GM12878 (cell line): ENCODE measurements at regions of chr20 and their contacts with region 1.

Region 1: GRCh38 chr20:59087829-59088433 is 45.3 kb upstream of the PRELID3B start:
- DNase-seq: no peak
- ATAC-seq: peak; percentile 91
- H3K4me3 ChIP-seq: no peak overlapping the region
- H3K27ac ChIP-seq: no peak overlapping the region
- H3K4me1 ChIP-seq: no peaks in the 10 kb centered on the region
- H3K27me3 ChIP-seq: peaks cover 0 to 11% of the 10 kb centered on the region in 2 experiments
- CTCF ChIP-seq: peak; percentile 75 to 91 (median 83)
- EP300 ChIP-seq: no peak
- POLR2A ChIP-seq: no peak
- RAD21 ChIP-seq: peak; percentile 83

Region 2: GRCh38 chr20:58864350-58864749 is 223.6 kb before region 1 on chr20:
- CTCF ChIA-PET with region 1: interaction called, 24 read pairs
- POLR2A ChIA-PET with region 1: no interaction called
- RAD21 ChIA-PET with region 1: interaction called, 6 read pairs
- SMC1A ChIA-PET with region 1: interaction called, 20 read pairs
- in situ Hi-C with region 1: no loop called
- intact Hi-C with region 1: loop called (anchors 5 kb)
- DNase-seq: no peak
- ATAC-seq: peak; percentile 76
- H3K4me3 ChIP-seq: no peak overlapping the region
- H3K27ac ChIP-seq: no peak overlapping the region
- H3K4me1 ChIP-seq: no peaks in the 10 kb centered on the region
- H3K27me3 ChIP-seq: no peaks in the 10 kb centered on the region
- CTCF ChIP-seq: peak; percentile 35 to 54 (median 46); a peak in 5 of 6 replicates
- EP300 ChIP-seq: no peak
- POLR2A ChIP-seq: no peak
- RAD21 ChIP-seq: peak; percentile 83

Region 3: GRCh38 chr20:58893355-58894120 is 194.4 kb before region 1 on chr20:
- CTCF ChIA-PET with region 1: no interaction called
- POLR2A ChIA-PET with region 1: no interaction called
- RAD21 ChIA-PET with region 1: no interaction called
- SMC1A ChIA-PET with region 1: no interaction called
- in situ Hi-C with region 1: no loop called
- intact Hi-C with region 1: no loop called
- DNase-seq: no peak
- ATAC-seq: peak; percentile 32
- H3K4me3 ChIP-seq: peak overlapping the region; percentile 67
- H3K27ac ChIP-seq: peak overlapping the region; percentile 71
- H3K4me1 ChIP-seq: peaks cover 14% of the 10 kb centered on the region
- H3K27me3 ChIP-seq: no peaks in the 10 kb centered on the region
- CTCF ChIP-seq: no peak
- EP300 ChIP-seq: no peak
- POLR2A ChIP-seq: no peak
- RAD21 ChIP-seq: no peak

Region 4: GRCh38 chr20:58970146-58970545 is 117.8 kb before region 1 on chr20:
- CTCF ChIA-PET with region 1: no interaction called
- POLR2A ChIA-PET with region 1: no interaction called
- RAD21 ChIA-PET with region 1: no interaction called
- SMC1A ChIA-PET with region 1: no interaction called
- in situ Hi-C with region 1: no loop called
- intact Hi-C with region 1: no loop called
- DNase-seq: no peak
- ATAC-seq: peak; percentile 79
- H3K4me3 ChIP-seq: no peak overlapping the region
- H3K27ac ChIP-seq: no peak overlapping the region
- H3K4me1 ChIP-seq: peaks cover 9% of the 10 kb centered on the region; the same call in 1 of the 2 replicates
- H3K27me3 ChIP-seq: no peaks in the 10 kb centered on the region
- CTCF ChIP-seq: no peak
- EP300 ChIP-seq: no peak
- POLR2A ChIP-seq: no peak
- RAD21 ChIP-seq: no peak

Region 5: GRCh38 chr20:59055295-59055694 is 32.6 kb before region 1 on chr20:
- CTCF ChIA-PET with region 1: interaction called, 11 read pairs
- POLR2A ChIA-PET with region 1: no interaction called
- RAD21 ChIA-PET with region 1: no interaction called
- SMC1A ChIA-PET with region 1: no interaction called
- in situ Hi-C with region 1: no loop called
- intact Hi-C with region 1: no loop called
- DNase-seq: no peak
- ATAC-seq: peak; percentile 53; the same call in 2 of the 3 replicates
- H3K4me3 ChIP-seq: no peak overlapping the region
- H3K27ac ChIP-seq: no peak overlapping the region
- H3K4me1 ChIP-seq: no peaks in the 10 kb centered on the region
- H3K27me3 ChIP-seq: peaks cover 0 to 8% of the 10 kb centered on the region in 2 experiments; a peak in 2 of 4 replicates
- CTCF ChIP-seq: peak in 2 of 3 experiments; percentile 22 to 36; a peak in 4 of 6 replicates
- EP300 ChIP-seq: no peak
- POLR2A ChIP-seq: no peak
- RAD21 ChIP-seq: peak; percentile 24

Region 6: DNA sequence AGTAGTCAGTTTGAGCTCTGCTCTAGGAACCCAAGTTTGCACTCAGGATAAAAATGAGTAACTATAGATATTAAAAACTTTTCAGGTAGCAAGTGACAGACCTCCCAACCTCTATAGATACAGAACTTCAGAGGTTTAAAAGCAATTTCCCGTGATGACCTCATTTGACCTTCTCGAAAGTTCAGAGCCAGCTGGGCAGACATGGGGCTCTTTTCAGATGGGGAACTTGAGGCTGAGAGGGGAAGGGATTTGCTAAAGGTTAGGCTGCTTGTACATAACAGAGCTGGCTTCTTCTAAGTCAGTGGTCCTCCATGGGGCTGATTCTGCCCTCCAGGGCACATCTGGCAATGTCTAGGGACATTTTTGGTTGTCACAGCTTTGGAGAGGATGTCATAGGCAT is 16.9 kb after region 1 on chr20:
- CTCF ChIA-PET with region 1: interaction called, 13 read pairs
- POLR2A ChIA-PET with region 1: no interaction called
- RAD21 ChIA-PET with region 1: no interaction called
- SMC1A ChIA-PET with region 1: no interaction called
- in situ Hi-C with region 1: no loop called
- intact Hi-C with region 1: no loop called
- DNase-seq: no peak
- ATAC-seq: no peak
- H3K4me3 ChIP-seq: no peak overlapping the region
- H3K27ac ChIP-seq: no peak overlapping the region
- H3K4me1 ChIP-seq: no peaks in the 10 kb centered on the region
- H3K27me3 ChIP-seq: peaks cover 1 to 2% of the 10 kb centered on the region in 2 experiments; a peak in 2 of 4 replicates
- CTCF ChIP-seq: no peak
- EP300 ChIP-seq: no peak
- POLR2A ChIP-seq: no peak
- RAD21 ChIP-seq: no peak

Region 7: DNA sequence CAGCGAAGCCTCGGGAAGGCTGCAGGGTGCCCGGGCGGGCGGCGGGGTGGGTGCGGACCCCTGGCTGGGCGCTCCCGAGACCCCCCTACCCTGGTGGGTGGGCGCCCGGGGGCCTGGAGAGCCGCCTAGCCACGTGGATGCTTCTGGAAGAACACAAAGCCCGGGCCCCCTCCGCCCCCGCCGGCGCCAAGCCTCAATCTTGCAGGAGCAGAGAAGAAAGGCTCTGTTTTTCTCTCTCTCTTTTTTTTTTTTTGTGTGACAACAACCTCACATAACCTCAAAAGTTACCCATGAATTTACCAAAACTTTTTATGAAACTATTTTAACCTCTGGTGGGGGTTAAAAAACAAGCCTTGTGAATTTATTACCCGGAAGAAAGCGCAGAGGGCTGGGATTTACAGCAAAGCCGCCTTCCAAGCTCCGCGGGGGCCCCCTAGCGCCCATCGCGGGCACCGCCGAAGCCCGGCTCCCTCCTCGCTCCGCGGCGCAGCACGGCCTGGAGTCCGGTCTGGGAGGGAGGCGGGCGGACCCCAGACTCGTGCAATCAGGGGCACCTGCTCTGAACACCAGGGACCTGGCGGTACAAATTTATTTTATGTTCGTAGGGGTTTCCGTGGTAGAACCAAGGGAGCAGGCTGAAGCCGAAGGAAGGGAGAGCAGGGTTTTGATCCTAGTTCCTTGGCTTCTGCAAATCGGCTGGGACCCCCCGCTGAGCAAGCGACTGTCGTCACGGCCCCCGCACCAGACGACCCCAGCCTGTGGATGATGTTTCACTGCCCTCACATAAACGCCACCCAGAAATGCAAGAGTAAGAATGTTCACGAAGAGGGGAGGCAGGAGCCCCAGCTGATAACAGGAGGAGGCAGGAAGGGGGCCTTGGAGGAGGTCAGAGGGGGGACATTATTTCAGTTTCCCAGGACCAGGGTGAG is 134.6 kb after region 1 on chr20:
- CTCF ChIA-PET with region 1: interaction called, 24 read pairs
- POLR2A ChIA-PET with region 1: no interaction called
- RAD21 ChIA-PET with region 1: interaction called, 7 read pairs
- SMC1A ChIA-PET with region 1: interaction called, 14 read pairs
- in situ Hi-C with region 1: no loop called
- intact Hi-C with region 1: loop called (anchors 1 kb)
- DNase-seq: peak; percentile 1
- ATAC-seq: peak; percentile 100
- H3K4me3 ChIP-seq: peak overlapping the region; percentile 40; the same call in 1 of the 2 replicates
- H3K27ac ChIP-seq: no peak overlapping the region
- H3K4me1 ChIP-seq: no peaks in the 10 kb centered on the region
- H3K27me3 ChIP-seq: peaks cover 8 to 11% of the 10 kb centered on the region in 2 experiments
- CTCF ChIP-seq: peak; percentile 93 to 96 (median 94)
- EP300 ChIP-seq: no peak
- POLR2A ChIP-seq: no peak
- RAD21 ChIP-seq: peak; percentile 85

Region 8: DNA sequence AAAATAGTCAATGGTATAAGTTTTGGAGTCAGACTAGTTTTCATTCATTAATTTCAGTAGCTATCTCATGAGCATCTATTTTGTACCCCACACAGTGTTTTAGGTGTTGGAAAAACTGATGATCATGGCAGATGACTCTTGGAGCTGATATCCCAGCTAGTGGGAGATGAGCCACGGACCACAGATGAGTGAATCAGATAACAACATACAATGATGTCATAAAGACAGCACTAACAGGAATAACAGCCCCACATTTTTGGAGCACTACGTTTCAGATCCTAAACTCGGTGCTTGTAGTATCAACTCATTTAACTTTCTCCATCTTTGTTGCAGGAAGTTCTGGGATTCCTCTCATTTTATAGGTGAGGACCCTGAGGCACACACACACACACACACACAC is 144.7 kb after region 1 on chr20:
- CTCF ChIA-PET with region 1: no interaction called
- POLR2A ChIA-PET with region 1: no interaction called
- RAD21 ChIA-PET with region 1: no interaction called
- SMC1A ChIA-PET with region 1: no interaction called
- in situ Hi-C with region 1: no loop called
- intact Hi-C with region 1: no loop called
- DNase-seq: no peak
- ATAC-seq: no peak
- H3K4me3 ChIP-seq: no peak overlapping the region
- H3K27ac ChIP-seq: no peak overlapping the region
- H3K4me1 ChIP-seq: no peaks in the 10 kb centered on the region
- H3K27me3 ChIP-seq: peaks cover 0 to 3% of the 10 kb centered on the region in 2 experiments; a peak in 1 of 4 replicates
- CTCF ChIP-seq: no peak
- EP300 ChIP-seq: no peak
- POLR2A ChIP-seq: no peak
- RAD21 ChIP-seq: no peak

Region 9: DNA sequence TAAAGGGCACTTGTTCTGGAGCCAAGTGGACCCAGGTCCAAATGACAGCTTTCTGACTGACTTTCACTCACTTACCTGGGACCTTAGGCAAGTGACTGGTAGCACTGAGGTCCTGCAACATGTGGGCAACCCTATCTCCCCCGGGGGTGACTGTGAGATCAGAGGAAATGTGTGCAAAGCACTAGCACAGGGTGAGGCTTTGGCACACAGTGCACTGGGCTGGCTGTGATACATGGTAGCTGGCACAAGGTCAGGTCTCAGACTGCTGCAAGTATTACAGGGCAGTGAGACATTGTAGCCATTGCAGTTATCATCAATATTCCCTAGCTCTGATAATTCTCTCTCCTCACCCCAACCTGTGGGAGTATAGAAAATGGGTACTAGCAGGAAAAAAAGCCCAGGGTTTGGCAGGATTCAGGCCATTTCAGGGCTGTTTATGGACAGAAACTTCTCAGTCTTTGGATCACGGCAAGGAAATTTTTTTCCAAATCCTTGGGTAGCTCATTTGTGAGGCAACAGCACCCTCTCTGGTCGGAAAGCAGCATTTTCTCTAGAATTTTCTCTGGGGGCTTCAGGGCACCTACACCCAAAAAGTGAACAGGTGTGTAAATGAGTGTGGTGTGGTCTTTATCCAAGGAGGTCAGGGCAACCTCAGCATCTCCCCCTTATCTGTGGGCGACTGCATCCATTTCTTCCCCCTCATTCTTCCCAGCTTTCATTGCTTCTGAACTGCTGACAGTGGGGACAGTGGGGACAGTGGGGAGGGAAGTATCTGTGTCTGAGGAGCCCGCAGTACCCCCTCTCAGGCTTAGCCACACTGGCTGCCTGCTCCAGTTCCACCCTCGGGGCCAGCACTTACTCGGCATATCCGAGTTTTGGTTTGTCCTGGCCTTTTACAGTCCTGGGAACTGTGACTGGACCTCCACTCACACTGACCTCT is 367.7 kb after region 1 on chr20:
- CTCF ChIA-PET with region 1: interaction called, 14 read pairs
- POLR2A ChIA-PET with region 1: no interaction called
- RAD21 ChIA-PET with region 1: interaction called, 6 read pairs
- SMC1A ChIA-PET with region 1: no interaction called
- in situ Hi-C with region 1: no loop called
- intact Hi-C with region 1: loop called (anchors 10 kb)
- DNase-seq: no peak
- ATAC-seq: no peak
- H3K4me3 ChIP-seq: no peak overlapping the region
- H3K27ac ChIP-seq: no peak overlapping the region
- H3K4me1 ChIP-seq: no peaks in the 10 kb centered on the region
- H3K27me3 ChIP-seq: peaks cover 0 to 3% of the 10 kb centered on the region in 2 experiments; a peak in 2 of 4 replicates
- CTCF ChIP-seq: peak; percentile 42 to 48 (median 44); a peak in 5 of 6 replicates
- EP300 ChIP-seq: no peak
- POLR2A ChIP-seq: no peak
- RAD21 ChIP-seq: peak; percentile 57

Region 10: GRCh38 chr20:59802471-59803221 is 714.7 kb after region 1 on chr20:
- CTCF ChIA-PET with region 1: no interaction called
- POLR2A ChIA-PET with region 1: no interaction called
- RAD21 ChIA-PET with region 1: no interaction called
- SMC1A ChIA-PET with region 1: no interaction called
- in situ Hi-C with region 1: no loop called
- intact Hi-C with region 1: no loop called
- DNase-seq: no peak
- ATAC-seq: no peak
- H3K4me3 ChIP-seq: no peak overlapping the region
- H3K27ac ChIP-seq: no peak overlapping the region
- H3K4me1 ChIP-seq: no peaks in the 10 kb centered on the region
- H3K27me3 ChIP-seq: no peaks in the 10 kb centered on the region; a peak in 3 of 4 replicates
- CTCF ChIP-seq: no peak
- EP300 ChIP-seq: no peak
- POLR2A ChIP-seq: no peak
- RAD21 ChIP-seq: no peak